ENCODE measurements at regions of chr5 and their contacts with region 1.

Region 1: GRCh38 chr5:140302786-140303639 is at the start of gene PFDN1:
- DNase-seq: peak; percentile 99
- H3K4me3 Mint-ChIP-seq: peak within 1 kb of the TSS; percentile 100
- H3K27ac Mint-ChIP-seq: peak within 1 kb of the TSS; percentile 100
- H3K4me1 Mint-ChIP-seq: peaks cover 30% of the 10 kb centered on the region
- H3K27me3 Mint-ChIP-seq: no peaks in the 10 kb centered on the region
- CTCF ChIP-seq: no peak
- total RNA-seq, gene PFDN1: 94.7 and 102 TPM in 2 replicates

Region 2: GRCh38 chr5:140207250-140207964 is 95.6 kb before region 1 on chr5:
- CTCF ChIA-PET with region 1: no interaction called
- POLR2A ChIA-PET with region 1: no interaction called
- intact Hi-C with region 1: no loop called
- DNase-seq: no peak
- H3K4me3 Mint-ChIP-seq: no peak overlapping the region
- H3K27ac Mint-ChIP-seq: no peak overlapping the region
- H3K4me1 Mint-ChIP-seq: no peaks in the 10 kb centered on the region
- H3K27me3 Mint-ChIP-seq: no peaks in the 10 kb centered on the region
- CTCF ChIP-seq: no peak

Region 3: GRCh38 chr5:140287801-140288521 is 15.1 kb before region 1 on chr5:
- CTCF ChIA-PET with region 1: interaction called, 4 read pairs
- POLR2A ChIA-PET with region 1: interaction called, 24 read pairs
- intact Hi-C with region 1: no loop called
- DNase-seq: no peak
- H3K4me3 Mint-ChIP-seq: no peak overlapping the region
- H3K27ac Mint-ChIP-seq: no peak overlapping the region
- H3K4me1 Mint-ChIP-seq: peaks cover 20% of the 10 kb centered on the region
- H3K27me3 Mint-ChIP-seq: no peaks in the 10 kb centered on the region
- CTCF ChIP-seq: no peak

Region 4: GRCh38 chr5:140329739-140330481 is 26.9 kb after region 1 on chr5:
- CTCF ChIA-PET with region 1: interaction called, 4 read pairs
- POLR2A ChIA-PET with region 1: interaction called, 10 read pairs
- intact Hi-C with region 1: no loop called
- DNase-seq: no peak
- H3K4me3 Mint-ChIP-seq: no peak overlapping the region
- H3K27ac Mint-ChIP-seq: no peak overlapping the region
- H3K4me1 Mint-ChIP-seq: no peaks in the 10 kb centered on the region
- H3K27me3 Mint-ChIP-seq: no peaks in the 10 kb centered on the region
- CTCF ChIP-seq: no peak

Region 5: DNA sequence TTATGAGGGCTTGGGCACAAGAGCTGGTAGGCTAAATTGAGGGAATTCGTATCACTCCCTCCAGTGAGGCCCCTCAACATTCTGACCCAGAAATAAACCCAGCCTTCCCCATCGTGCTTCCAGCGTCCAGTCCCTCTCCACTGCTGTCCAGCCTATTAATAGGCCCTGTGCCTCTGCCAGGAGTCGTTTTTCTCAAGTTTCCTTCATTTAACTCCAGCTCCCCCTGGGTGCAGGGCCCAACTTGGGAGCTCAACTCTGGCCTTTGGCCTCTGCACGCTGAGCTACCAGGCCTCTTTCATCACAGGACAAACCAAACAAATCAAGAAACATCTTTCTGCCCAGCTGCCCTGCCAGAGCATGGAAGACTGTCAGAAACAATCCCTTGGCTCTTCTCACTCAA is 33.4 kb after region 1 on chr5:
- CTCF ChIA-PET with region 1: no interaction called
- POLR2A ChIA-PET with region 1: interaction called, 13 read pairs
- intact Hi-C with region 1: no loop called
- DNase-seq: no peak
- H3K4me3 Mint-ChIP-seq: no peak overlapping the region
- H3K27ac Mint-ChIP-seq: no peak overlapping the region
- H3K4me1 Mint-ChIP-seq: peaks cover 16% of the 10 kb centered on the region
- H3K27me3 Mint-ChIP-seq: no peaks in the 10 kb centered on the region
- CTCF ChIP-seq: no peak

Measured in MCF 10A (cell line).